Prostate gland (tissue), 2 donors: ENCODE measurements at regions of chr20 and their contacts with region 1.

Region 1: GRCh38 chr20:45044084-45044573 is 56.8 kb downstream of the KCNS1 start:
- DNase-seq: peak; percentile 21
- H3K4me3 ChIP-seq: no peak overlapping the region
- H3K27ac ChIP-seq: no peak overlapping the region
- H3K4me1 ChIP-seq: no peaks in the 10 kb centered on the region
- H3K27me3 ChIP-seq: no peaks in the 10 kb centered on the region
- CTCF ChIP-seq: peak; percentile 49 to 74 (median 70)
- POLR2A ChIP-seq: no peak

Region 2: DNA sequence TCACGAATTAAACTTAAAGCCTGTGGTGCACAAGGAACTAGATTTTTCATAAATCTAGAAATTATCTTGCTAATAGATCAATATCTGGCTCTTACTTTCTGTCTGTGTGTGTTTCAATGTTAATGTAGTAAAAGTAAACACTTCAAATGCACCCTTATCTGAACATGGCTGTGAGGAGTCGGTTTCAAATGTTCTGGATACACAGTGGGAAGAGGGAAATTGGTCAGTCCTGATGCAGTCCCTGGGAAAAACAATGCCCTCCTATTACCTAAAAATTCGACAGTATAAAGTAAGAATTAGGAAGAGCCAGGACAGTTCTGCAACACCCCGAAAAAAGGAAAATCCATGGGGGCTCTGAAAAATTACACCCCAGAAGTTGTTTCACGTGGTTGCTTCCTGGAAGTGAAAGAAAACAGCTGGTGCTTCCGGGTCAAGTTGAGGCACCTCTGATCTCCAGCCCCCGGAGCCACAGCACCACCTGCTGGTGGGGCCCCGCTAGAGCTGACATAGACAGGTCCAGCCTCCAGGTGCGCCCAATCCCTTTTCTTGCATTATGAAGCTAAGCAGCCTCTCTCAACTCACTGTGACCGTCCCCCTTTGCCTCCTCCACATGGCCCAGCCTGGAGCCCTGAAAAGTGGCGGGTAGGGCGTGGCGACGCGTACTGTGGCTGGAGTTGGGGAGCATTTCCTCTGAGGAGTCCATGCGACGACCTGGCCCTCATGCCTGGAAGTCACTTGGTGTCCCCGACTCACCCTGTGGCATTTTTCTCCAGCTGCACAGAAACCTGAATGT is 185.3 kb after region 1 on chr20:
- intact Hi-C with region 1: no loop called
- DNase-seq: no peak
- H3K4me3 ChIP-seq: no peak overlapping the region
- H3K27ac ChIP-seq: no peak overlapping the region
- H3K4me1 ChIP-seq: no peaks in the 10 kb centered on the region
- H3K27me3 ChIP-seq: no peaks in the 10 kb centered on the region
- CTCF ChIP-seq: peak; percentile 13 to 56 (median 44)
- POLR2A ChIP-seq: no peak

Region 3: GRCh38 chr20:45293041-45294002 is 249.2 kb after region 1 on chr20:
- intact Hi-C with region 1: loop called (anchors 5 kb)
- DNase-seq: peak; percentile 58
- H3K4me3 ChIP-seq: peak overlapping the region; percentile 32 to 33
- H3K27ac ChIP-seq: peak overlapping the region in 1 of 2 donors; percentile 16
- H3K4me1 ChIP-seq: no peaks in the 10 kb centered on the region
- H3K27me3 ChIP-seq: no peaks in the 10 kb centered on the region
- CTCF ChIP-seq: peak; percentile 59 to 88 (median 76)
- POLR2A ChIP-seq: no peak